Sigmoid colon (tissue), 7 donors: ENCODE measurements at regions of chr7 and their contacts with region 1.

Region 1: DNA sequence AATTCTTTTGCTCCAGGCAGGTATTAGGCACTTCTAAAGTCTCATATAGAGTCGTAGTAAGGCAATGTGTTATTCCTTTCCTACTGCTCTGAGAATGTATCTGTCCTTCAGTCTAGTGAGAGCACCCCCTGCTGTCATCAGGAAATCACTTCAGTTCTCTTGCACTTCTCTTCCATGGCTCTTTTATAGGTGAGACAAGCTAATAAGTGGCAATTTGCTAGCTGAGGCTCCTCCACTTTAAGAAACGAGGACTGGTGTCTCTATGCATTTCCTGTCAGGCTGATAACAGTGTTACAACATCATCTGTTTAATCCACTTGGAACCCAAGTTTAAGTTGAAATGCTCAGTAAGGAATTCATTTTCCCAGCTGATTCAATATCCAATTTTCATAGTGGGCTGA is 350.6 kb downstream of the TFEC start:
- DNase-seq: no peak
- H3K4me3 ChIP-seq: no peak overlapping the region
- H3K27ac ChIP-seq: no peak overlapping the region
- H3K4me1 ChIP-seq: peaks cover 0 to 35% (median 15%) of the 10 kb centered on the region in 4 donors
- H3K27me3 ChIP-seq: no peaks in the 10 kb centered on the region
- CTCF ChIP-seq: peak in 1 of 4 experiments; percentile 26
- EP300 ChIP-seq: no peak
- POLR2A ChIP-seq: no peak

Region 2: DNA sequence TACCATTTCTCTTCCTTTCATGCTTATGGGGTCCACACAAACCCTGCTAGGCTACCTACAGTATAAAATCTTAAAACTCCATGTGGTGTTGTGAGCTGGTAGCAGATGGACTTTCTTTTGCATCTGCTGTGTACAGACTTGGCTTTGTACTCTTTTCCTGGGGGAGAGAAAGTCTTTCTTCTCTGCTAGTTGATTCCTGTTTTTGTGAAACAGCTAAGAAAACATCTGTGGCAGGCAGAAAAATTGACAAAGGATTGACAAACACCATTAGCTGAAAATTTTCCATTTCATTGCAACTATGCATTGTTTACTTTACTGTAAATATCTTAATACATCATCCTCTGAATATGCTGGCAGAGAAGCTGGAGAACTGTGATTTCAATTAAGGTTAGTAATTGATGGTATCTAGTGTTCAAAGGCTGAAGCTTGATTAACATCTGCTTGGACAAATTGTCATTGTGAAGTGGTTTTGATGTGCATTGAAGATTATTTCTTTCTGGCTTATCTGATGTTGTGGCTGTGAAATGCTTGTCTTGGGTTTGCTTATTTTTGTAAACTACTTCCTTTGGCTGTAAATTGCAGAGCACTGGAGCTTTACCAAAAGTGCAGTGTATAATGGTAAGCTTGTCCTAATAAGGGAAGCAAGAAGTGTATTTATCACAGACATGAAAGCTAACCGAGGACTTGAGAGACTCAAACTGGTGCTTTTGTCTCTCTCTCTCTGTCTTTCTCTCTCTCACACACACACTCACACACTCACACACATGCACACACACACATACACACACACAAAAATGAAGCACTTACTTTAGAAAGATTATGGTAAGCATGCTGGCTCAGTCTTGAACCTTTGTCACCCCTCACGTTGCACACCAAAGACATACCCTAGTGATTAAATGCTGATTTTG is 1265.6 kb before region 1 on chr7 and contains the start of gene FOXP2:
- intact Hi-C with region 1: loop called (anchors 10 kb)
- DNase-seq: no peak
- H3K4me3 ChIP-seq: peak within 1 kb of the TSS; percentile 31 to 55 (median 50)
- H3K27ac ChIP-seq: peak within 1 kb of the TSS; percentile 79 to 91 (median 85)
- H3K4me1 ChIP-seq: peaks cover 0 to 29% (median 17%) of the 10 kb centered on the region in 4 donors
- H3K27me3 ChIP-seq: no peaks in the 10 kb centered on the region
- CTCF ChIP-seq: no peak
- EP300 ChIP-seq: peak in 1 of 4 donors; percentile 3
- POLR2A ChIP-seq: no peak
- total RNA-seq, gene FOXP2: 91.2 to 150 (median 102) TPM

Region 3: GRCh38 chr7:115707258-115708012 is 27.5 kb after region 1 on chr7:
- intact Hi-C with region 1: no loop called
- DNase-seq: no peak
- H3K4me3 ChIP-seq: no peak overlapping the region
- H3K27ac ChIP-seq: no peak overlapping the region
- H3K4me1 ChIP-seq: no peaks in the 10 kb centered on the region
- H3K27me3 ChIP-seq: no peaks in the 10 kb centered on the region
- CTCF ChIP-seq: peak in 1 of 4 experiments; percentile 13
- EP300 ChIP-seq: no peak
- POLR2A ChIP-seq: no peak